ENCODE measurements at regions of chr12 and their contacts with region 1.

Region 1: GRCh38 chr12:110888256-110888991 is 32.0 kb downstream of the MYL2 start:
- DNase-seq: no peak
- H3K4me3 ChIP-seq: no peak overlapping the region
- CTCF ChIP-seq: no peak

Region 2: GRCh38 chr12:110449799-110450497 is 438.5 kb before region 1 on chr12 and contains the start of gene ARPC3:
- CTCF ChIA-PET with region 1: interaction called, 13 read pairs
- POLR2A ChIA-PET with region 1: no interaction called
- DNase-seq: peak; percentile 42
- H3K4me3 ChIP-seq: peak within 1 kb of the TSS; percentile 95
- CTCF ChIP-seq: peak; percentile 92

Region 3: GRCh38 chr12:110816248-110816647 is 72.2 kb before region 1 on chr12:
- CTCF ChIA-PET with region 1: no interaction called
- POLR2A ChIA-PET with region 1: no interaction called
- DNase-seq: no peak
- H3K4me3 ChIP-seq: no peak overlapping the region
- CTCF ChIP-seq: no peak

Measured in AG04449 (cell line).